ENCODE measurements at regions of chr16 and their contacts with region 1.

Region 1: DNA sequence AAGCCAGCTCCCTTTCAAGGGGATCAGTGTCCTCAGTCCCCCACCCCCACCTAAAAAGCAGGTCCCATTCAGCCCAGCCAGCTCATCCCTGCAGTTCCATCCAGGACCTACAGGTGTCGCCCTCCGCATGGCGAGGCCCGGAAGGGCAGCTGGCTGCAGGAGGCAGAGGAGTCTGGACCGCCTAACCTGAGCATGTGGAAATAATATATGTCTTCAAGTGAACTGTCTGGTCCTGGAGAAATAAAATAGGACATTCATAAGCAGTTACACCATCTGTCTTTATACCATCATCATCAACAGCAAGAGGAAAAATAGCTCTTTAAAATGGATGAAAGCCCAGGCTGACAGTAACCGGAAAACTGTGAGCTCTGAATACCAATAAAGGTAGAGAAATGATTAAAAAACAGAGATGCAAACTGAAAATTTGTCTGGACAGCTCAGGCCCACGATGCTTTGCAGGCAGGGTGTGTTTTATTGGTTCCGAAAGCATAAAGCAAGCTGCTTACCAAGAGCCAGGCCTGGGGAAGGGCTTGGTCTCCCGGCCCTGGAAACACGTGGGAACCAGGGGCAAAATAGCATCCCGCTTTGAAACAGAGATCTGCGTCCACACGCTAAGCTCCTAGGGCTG is 215.2 kb downstream of the ZFHX3 start:
- DNase-seq: peak; percentile 85

Region 2: GRCh38 chr16:72705801-72706200 is 126.9 kb before region 1 on chr16:
- CTCF ChIA-PET with region 1: no interaction called
- POLR2A ChIA-PET with region 1: no interaction called
- DNase-seq: no peak

Region 3: DNA sequence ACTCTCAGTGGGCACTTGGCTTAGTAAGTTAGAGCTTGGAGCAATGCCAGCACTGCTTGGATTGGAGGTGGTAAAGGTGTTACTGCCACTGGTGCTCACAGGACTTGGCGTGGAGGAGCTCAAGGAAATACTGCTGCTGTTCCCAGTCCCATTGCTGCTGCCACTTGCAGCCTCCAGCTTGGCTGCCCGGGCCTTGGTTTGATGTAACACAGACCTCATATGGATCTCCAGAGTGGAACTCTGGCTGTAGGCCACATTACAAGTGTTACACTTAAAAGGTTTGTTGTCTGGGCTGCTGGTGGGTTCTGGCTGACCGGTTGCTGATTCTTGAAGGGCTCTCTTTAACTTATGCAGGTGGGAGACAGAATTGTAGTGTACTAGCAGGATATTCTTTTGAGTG is 35.1 kb before region 1 on chr16:
- CTCF ChIA-PET with region 1: no interaction called
- POLR2A ChIA-PET with region 1: no interaction called
- DNase-seq: no peak

Region 4: GRCh38 chr16:72818236-72818845 is 14.4 kb before region 1 on chr16:
- CTCF ChIA-PET with region 1: interaction called, 12 read pairs
- POLR2A ChIA-PET with region 1: no interaction called
- DNase-seq: no peak

Region 5: GRCh38 chr16:72847187-72848027 is 14.7 kb after region 1 on chr16:
- CTCF ChIA-PET with region 1: interaction called, 21 read pairs
- POLR2A ChIA-PET with region 1: no interaction called
- DNase-seq: peak; percentile 42